Activated CD4-positive, alpha-beta memory T cell treated with anti-CD3 and anti-CD28 coated beads for 36 hours (primary cell): ENCODE measurements at regions of chr3 and their contacts with region 1.

Region 1: DNA sequence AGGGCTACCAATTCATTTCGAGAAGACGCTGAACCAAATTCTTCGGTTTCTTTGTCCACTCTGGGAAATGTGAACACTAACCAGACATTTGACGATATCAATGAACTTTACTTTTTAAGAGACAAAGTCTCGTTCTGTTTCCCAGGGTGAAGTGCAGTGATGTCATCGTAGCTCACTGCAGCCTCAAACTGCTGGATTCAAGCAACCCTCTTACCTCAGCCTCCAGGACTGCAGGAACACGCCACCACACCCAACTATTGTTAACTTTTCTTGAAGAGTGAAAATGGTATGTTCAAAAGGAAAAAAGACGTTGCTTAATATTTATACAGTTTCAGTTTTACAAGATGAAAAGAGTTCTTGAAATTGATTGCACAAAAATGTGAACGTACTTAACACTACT is 30.6 kb downstream of the MB21D2 start:
- DNase-seq: peak; percentile 48
- H3K4me3 Mint-ChIP-seq: peak overlapping the region; percentile 39
- H3K27ac Mint-ChIP-seq: peak overlapping the region; percentile 84
- H3K4me1 Mint-ChIP-seq: peaks cover 58% of the 10 kb centered on the region
- H3K27me3 Mint-ChIP-seq: peaks cover 5% of the 10 kb centered on the region

Region 2: DNA sequence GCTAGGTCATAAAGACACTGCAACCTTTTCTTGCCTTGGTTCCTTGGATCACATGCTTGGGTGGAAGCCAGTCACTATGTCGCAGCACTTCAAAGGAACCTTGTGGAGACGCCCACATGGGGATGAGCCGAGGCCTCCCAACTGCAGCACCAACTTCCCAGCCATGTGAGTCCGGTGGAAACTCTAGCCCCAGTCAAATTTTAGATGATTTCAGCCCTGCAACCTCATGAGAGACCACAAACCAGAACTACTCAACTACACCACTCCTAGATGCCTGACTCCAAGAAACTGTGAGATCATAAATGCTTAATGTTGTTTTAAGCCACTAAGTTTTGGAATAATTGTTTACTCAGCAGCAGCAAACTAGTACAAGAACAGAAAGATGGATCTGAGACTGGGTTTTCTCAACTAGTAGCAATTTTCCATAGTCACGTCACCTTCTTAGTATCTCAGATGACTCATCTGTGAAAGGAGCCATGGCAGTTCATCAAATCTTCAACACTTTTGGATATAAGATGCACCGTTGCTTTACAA is 55.9 kb before region 1 on chr3:
- CTCF ChIA-PET with region 1: no interaction called
- POLR2A ChIA-PET with region 1: no interaction called
- intact Hi-C with region 1: loop called (anchors 1 kb)
- DNase-seq: peak; percentile 64
- H3K4me3 Mint-ChIP-seq: no peak overlapping the region
- H3K27ac Mint-ChIP-seq: peak overlapping the region; percentile 24
- H3K4me1 Mint-ChIP-seq: peaks cover 39% of the 10 kb centered on the region
- H3K27me3 Mint-ChIP-seq: peaks cover 1% of the 10 kb centered on the region

Region 3: GRCh38 chr3:192851821-192852424 is 35.1 kb before region 1 on chr3:
- CTCF ChIA-PET with region 1: no interaction called
- POLR2A ChIA-PET with region 1: interaction called, 4 read pairs
- intact Hi-C with region 1: loop called (anchors 1 kb)
- DNase-seq: no peak
- H3K4me3 Mint-ChIP-seq: no peak overlapping the region
- H3K27ac Mint-ChIP-seq: no peak overlapping the region
- H3K4me1 Mint-ChIP-seq: peaks cover 57% of the 10 kb centered on the region
- H3K27me3 Mint-ChIP-seq: no peaks in the 10 kb centered on the region

Region 4: DNA sequence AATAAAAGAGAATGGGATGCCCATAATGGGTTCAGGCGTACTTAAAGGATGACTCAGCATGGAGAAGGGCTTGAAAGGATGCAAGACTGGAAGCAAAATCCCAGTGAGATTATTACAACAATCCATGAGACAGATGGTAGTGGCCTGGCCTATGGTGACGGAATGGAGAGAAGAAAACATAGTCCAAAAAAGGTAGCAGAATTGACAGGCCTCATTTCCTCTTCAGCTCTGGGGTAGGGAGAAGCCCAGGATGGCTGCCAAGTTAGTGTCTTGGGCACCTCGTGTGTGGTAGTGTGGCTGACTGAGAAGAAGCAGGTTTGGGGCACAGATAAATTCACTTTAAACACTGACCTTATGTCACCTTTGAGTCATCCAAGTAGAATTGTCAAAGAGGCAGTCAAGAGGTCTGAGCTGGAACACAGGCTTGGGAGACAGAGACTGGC is 12.5 kb after region 1 on chr3:
- CTCF ChIA-PET with region 1: interaction called, 11 read pairs
- POLR2A ChIA-PET with region 1: interaction called, 14 read pairs
- intact Hi-C with region 1: loop called (anchors 1 kb)
- DNase-seq: peak; percentile 37
- H3K4me3 Mint-ChIP-seq: no peak overlapping the region
- H3K27ac Mint-ChIP-seq: peak overlapping the region; percentile 90
- H3K4me1 Mint-ChIP-seq: peaks cover 54% of the 10 kb centered on the region
- H3K27me3 Mint-ChIP-seq: peaks cover 8% of the 10 kb centered on the region

Region 5: DNA sequence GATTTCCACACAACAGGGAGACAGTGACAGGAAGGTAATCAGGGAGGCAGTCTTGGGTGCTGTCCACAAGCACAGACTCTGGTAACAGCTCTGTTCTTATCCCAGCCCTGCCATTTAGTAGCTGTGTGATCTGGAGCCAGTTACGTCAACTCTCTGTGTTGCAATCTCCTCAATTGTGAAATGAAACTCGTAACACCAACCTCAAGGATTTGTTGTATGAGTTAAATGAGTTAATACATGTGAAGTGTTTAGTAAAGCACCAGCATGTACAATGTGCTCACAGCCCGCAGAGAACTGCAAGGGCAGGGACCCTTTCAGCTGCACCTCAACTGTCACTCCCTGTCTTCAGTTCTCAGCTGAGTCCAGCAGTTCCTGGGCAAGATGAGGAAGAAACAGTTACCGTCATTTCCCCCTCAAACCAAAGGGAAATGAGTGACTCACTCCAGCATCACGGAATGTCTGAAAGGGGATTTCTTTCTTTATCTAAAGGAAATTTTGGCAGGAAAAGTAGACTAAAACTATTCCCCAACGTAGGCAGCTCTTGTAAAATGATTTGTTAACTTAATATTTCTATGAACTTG is 70.5 kb after region 1 on chr3:
- CTCF ChIA-PET with region 1: no interaction called
- POLR2A ChIA-PET with region 1: no interaction called
- intact Hi-C with region 1: loop called (anchors 1 kb)
- DNase-seq: peak; percentile 28
- H3K4me3 Mint-ChIP-seq: no peak overlapping the region
- H3K27ac Mint-ChIP-seq: no peak overlapping the region
- H3K4me1 Mint-ChIP-seq: peaks cover 24% of the 10 kb centered on the region
- H3K27me3 Mint-ChIP-seq: no peaks in the 10 kb centered on the region